HAP-1 (cell line): ENCODE measurements at regions of chr6 and their contacts with region 1.

Region 1: DNA sequence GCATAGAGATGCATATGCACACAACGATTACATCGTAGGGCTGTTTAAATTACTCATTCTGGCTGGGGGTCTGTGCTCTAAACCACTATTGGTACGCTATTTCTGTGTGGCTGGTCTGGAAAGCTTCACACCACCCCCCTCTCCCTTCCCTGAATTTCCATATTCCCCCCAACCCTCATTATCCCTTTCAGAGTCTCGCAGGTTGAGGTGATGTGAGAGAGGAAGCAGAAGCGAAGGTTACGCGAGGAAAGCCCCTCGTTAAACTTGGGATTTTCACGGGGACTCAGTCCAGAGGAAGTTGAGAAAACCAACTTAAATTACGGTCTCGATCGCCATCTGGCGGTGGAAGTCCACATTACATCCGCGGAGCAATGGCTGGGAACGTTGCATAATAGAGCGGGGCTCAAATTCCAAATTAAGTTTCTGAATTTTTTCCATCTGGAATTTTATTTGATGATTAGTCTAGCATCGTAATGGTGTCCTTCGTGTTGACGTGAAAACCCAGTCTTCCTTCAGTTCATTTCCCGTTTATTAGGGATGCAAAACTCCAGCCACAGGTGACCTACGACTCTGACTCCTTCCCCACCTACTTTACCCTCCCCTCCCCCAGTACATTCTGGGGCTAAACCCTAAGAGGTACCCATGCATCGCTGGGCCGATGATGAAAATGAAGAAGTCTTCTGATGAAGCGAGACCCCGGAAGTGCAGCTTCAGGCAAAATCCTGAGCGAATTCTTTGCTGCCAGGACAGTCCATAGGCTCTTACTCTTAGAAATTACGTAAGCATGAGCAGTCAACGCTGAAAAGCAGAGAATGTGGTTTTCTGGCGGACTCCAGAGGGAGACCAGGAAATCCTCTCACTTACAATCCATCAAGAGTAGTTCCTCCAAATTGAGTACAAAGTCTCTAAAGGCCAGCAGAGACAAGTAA is 19.7 kb downstream of the HLA-DOB start:
- DNase-seq: peak; percentile 48 to 87
- H3K4me3 ChIP-seq: peak overlapping the region; percentile 8; the same call in 1 of the 2 replicates
- H3K4me1 ChIP-seq: 0 out of 2 replicates have a peak, but pooled peaks cover 3% of the 10 kb centered on the region
- H3K27me3 ChIP-seq: peaks cover 23% of the 10 kb centered on the region

Region 2: DNA sequence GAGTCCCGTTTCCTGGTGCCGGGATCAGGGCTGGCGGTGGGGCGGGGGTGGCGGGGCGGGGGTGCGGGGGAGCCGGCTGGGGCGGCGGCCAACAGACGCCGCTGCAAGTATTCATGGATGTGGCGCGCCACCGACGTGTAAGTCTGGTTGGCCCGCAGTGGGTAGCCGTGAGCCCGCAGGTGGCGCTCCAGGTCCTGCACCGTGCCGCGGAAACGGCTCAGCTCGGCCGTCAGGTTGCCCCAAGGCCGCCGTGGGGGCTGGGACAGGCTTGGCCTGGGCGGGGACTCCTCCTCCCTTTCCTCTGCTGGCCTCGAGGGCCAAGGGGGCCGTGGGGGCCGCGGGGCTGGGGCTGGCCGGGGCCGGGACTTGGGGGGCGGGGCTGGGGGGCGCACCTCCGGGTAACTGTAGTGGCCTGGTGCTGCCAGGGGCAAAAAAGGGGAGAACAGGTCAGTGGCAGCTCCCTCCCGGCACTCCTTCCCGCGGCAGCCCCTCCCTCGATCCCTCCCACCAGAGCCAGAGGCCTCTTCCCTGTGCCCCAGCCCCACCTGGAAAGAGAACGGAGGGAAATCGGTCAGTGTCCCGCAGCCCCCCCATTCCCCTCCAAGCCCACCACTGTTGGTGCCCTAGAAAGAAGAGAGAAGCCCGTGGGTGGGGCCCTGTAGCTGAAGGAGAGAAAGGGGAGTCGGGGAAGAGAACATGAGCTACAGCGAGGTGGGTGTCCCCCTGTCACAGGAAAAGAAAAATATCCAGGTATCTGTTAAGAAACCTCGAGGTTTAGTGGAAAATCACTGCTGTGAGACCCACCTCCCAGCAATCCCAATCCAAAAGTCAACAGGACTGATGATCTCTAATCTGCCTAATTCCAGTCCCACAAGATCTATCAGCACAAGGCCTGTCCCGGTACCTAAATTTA is 709.3 kb before region 1 on chr6:
- in situ Hi-C with region 1: loop called (anchors 10 kb)
- DNase-seq: peak; percentile 58 to 87
- H3K4me3 ChIP-seq: no peak overlapping the region
- H3K4me1 ChIP-seq: no peaks in the 10 kb centered on the region
- H3K27me3 ChIP-seq: no peaks in the 10 kb centered on the region

Region 3: DNA sequence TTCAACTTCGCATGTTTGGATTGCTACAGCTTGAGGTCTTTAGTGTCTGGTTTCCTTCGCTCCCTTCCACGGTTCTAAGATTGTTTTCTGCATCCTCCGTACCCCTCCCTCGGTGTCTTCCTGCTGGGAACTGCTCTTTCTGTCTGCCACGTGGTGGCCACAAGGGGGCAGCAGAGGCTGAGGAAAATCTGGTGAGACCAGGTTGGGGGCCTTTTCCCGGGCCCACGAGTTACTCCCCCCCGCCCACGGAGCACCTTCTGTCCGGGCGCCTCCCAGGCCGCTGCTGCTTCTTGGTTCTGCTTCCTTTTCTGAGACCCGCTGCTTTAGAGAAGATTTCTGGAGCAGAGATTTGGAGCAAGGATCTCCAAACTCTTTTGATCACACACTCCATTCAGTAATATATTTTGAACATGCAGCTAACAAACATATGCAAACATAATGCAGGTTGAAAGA is 552.1 kb before region 1 on chr6:
- in situ Hi-C with region 1: loop called (anchors 25 kb)
- DNase-seq: peak; percentile 53 to 90
- H3K4me3 ChIP-seq: no peak overlapping the region
- H3K4me1 ChIP-seq: no peaks in the 10 kb centered on the region
- H3K27me3 ChIP-seq: no peaks in the 10 kb centered on the region

Region 4: GRCh38 chr6:33882154-33882553 is 1085.0 kb after region 1 on chr6:
- in situ Hi-C with region 1: no loop called
- DNase-seq: no peak
- H3K4me3 ChIP-seq: no peak overlapping the region
- H3K4me1 ChIP-seq: no peaks in the 10 kb centered on the region
- H3K27me3 ChIP-seq: peaks cover 6% of the 10 kb centered on the region; the same call in 1 of the 2 replicates